AG04450 (cell line): ENCODE measurements at regions of chr16 and their contacts with region 1.

Region 1: DNA sequence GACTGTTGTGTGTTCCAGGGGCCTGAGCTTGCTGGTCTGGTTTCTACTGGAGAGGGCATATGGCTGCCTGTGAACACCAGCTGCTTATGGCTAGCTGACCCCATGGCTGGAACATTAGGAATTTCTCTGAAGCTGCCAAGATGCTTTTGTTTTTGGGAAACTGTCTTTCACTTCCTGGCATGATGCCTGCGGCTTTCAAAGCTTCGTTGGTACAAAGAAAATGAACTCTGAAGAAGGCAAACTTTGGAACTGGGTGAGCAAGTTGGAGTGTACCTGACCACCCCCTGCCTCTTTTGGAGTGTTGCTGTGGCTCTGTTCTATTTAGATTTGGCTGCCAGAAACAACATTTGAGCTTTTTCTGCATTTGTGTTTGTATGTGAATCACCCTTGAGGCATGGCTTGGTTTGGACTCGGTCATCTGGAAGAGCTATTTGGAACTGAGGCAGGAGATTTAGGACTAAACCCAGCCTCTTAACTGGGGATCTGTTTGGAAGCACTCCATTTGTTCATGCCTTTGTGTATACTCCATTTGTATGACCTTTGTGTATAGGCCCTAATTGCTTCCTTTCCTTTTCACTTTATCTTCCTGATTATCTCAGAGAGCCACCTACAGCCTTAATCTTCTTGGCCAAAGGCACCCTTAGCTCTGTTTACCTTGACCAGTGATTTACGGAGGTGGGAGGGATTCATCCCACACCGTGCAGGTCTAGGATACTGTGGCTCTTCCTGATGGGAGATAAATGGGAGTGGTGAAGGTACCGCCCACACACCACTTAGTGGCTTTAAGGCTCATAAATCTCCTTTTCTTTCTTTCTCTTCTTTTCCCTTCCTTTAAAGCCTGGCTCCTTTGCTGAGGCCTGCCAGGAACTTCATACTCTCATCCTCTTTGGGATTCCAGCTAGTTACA is 7.3 kb upstream of the CPHXL start:
- DNase-seq: peak; percentile 85
- H3K4me3 ChIP-seq: peak overlapping the region; percentile 27; the same call in 1 of the 2 replicates
- H3K27ac ChIP-seq: peak overlapping the region; percentile 75
- H3K27me3 ChIP-seq: peaks cover 2% of the 10 kb centered on the region
- CTCF ChIP-seq: no peak

Region 2: GRCh38 chr16:75647492-75648264 is 85.9 kb before region 1 on chr16 and contains the starts of genes KARS1 and TERF2IP:
- CTCF ChIA-PET with region 1: no interaction called
- POLR2A ChIA-PET with region 1: interaction called, 20 read pairs
- DNase-seq: peak; percentile 74
- H3K4me3 ChIP-seq: peak within 1 kb of the TSS; percentile 94
- H3K27ac ChIP-seq: peak within 1 kb of the TSS; percentile 90
- H3K27me3 ChIP-seq: no peaks in the 10 kb centered on the region
- CTCF ChIP-seq: no peak
- polyA plus RNA-seq, gene KARS1: 190 and 203 TPM in 2 replicates
- polyA plus RNA-seq, gene TERF2IP: 41.4 and 59.5 TPM in 2 replicates

Region 3: DNA sequence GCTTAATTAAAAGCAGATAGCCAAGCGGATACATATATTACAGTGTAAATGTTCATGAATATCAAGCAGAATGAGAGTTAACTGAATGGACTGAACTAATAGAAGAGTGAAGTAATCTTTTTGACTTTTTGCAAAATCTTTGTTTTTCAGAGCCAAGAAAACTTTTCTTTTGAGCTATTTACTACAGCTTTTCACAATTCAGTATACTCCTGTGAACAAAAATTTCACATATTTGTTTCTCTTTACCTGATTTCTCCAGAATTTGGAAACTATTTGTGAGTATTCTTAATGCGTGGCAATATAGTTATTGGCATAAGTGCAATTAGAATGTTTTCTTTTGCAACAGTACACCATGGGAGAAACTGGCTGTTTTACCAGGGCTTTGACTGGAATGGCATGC is 23.2 kb before region 1 on chr16:
- CTCF ChIA-PET with region 1: no interaction called
- POLR2A ChIA-PET with region 1: no interaction called
- DNase-seq: no peak
- H3K4me3 ChIP-seq: no peak overlapping the region
- H3K27ac ChIP-seq: no peak overlapping the region
- H3K27me3 ChIP-seq: peaks cover 2% of the 10 kb centered on the region
- CTCF ChIP-seq: no peak

Region 4: GRCh38 chr16:75754141-75754540 is 20.6 kb after region 1 on chr16:
- CTCF ChIA-PET with region 1: interaction called, 7 read pairs
- POLR2A ChIA-PET with region 1: interaction called, 22 read pairs
- DNase-seq: peak; percentile 15
- H3K4me3 ChIP-seq: no peak overlapping the region
- H3K27ac ChIP-seq: no peak overlapping the region
- H3K27me3 ChIP-seq: no peaks in the 10 kb centered on the region
- CTCF ChIP-seq: no peak

Region 5: GRCh38 chr16:75947626-75948239 is 214.2 kb after region 1 on chr16:
- CTCF ChIA-PET with region 1: no interaction called
- POLR2A ChIA-PET with region 1: no interaction called
- DNase-seq: no peak
- H3K4me3 ChIP-seq: no peak overlapping the region
- H3K27ac ChIP-seq: no peak overlapping the region
- H3K27me3 ChIP-seq: no peaks in the 10 kb centered on the region
- CTCF ChIP-seq: no peak

Region 6: DNA sequence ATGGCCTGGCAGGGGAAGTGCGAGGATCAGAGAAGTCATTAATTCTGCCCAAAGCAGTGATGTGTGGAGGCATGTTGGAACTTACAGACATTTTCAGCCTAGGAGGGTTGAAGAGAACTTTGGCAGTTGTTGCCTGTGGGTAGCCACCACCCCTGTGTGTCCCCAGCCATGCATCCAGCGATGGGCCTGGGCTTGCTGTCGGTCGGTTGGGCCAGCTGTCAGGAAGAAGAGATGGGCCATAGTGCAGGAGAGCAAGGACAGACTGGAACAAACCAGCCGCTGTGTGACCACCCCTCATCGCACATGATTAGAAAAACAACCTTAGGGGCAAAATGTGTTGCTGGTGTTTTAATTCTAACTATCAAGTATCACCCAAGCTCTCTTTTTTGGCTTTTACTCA is 717.3 kb after region 1 on chr16:
- CTCF ChIA-PET with region 1: no interaction called
- POLR2A ChIA-PET with region 1: no interaction called
- DNase-seq: no peak
- H3K4me3 ChIP-seq: no peak overlapping the region
- H3K27ac ChIP-seq: no peak overlapping the region
- H3K27me3 ChIP-seq: no peaks in the 10 kb centered on the region
- CTCF ChIP-seq: no peak